Panc1 (cell line): ENCODE measurements at regions of chr11 and their contacts with region 1.

Region 1: DNA sequence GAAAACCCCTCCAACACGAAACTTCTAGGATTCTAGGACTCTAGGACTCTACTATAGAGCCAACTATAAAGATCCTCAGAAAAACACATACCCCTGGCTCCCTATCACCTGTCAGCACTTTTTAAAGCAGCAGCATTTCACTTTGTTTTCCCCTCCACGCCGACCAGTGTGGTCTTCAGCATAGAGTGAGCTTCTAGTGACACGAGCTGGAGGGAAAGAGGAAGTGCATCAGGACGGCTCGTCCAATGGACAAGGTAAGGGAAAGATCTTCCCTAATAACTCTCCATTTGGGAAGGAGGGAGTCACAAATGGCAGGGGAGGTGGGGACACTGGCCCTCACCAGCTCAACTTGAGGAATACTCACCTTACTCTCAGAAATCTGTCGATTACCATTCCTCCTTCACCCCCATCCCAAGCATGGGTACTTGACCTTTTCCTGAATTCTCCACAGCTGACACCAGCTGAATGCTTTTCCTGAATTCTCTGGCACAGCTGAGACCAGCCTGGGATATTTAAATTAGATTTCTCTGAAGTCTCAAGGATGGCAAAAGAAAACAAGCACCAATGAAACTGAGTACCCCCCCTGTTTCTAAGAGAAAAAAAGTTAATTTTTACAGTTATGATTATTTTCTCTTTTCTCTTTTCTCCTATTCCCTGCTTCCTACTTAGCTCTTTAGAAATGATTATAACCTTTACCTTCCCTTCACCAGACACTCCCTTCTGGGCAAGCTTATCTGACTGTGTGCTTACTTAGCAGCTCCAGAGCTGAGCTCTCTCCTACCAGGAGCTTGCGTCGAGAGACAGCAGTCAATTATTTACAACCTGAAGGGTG is 33.3 kb upstream of the NNMT start:
- DNase-seq: no peak
- ATAC-seq: peak; percentile 82
- H3K4me3 ChIP-seq: no peak overlapping the region
- H3K27ac ChIP-seq: no peak overlapping the region
- H3K4me1 ChIP-seq: no peaks in the 10 kb centered on the region
- H3K27me3 ChIP-seq: peaks cover 18% of the 10 kb centered on the region
- CTCF ChIP-seq: peak; percentile 85

Region 2: DNA sequence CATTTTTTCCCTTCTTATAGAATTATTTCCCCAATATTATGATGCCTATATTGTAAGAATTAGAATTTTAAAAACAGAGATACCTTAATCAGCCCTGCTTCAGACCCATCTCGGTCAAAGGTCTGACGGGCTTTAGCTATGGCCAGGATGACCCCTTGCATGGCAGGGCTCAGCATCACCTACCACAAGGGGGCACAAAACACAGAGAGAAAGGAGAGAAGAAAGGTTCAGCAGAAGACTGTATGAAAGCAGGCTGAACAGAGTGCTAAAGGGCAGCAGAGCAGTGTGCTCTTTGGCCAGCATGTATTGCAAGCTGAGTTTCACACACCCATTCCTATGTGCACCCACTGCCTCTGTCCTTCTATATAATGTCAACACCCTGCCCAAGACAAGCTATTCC is 456.5 kb before region 1 on chr11:
- CTCF ChIA-PET with region 1: interaction called, 4 read pairs
- POLR2A ChIA-PET with region 1: no interaction called
- in situ Hi-C with region 1: no loop called
- intact Hi-C with region 1: loop called (anchors 5 kb)
- DNase-seq: no peak
- ATAC-seq: peak; percentile 95
- H3K4me3 ChIP-seq: no peak overlapping the region
- H3K27ac ChIP-seq: no peak overlapping the region
- H3K4me1 ChIP-seq: no peaks in the 10 kb centered on the region
- H3K27me3 ChIP-seq: no peaks in the 10 kb centered on the region
- CTCF ChIP-seq: peak; percentile 78

Region 3: GRCh38 chr11:113896156-113896879 is 366.6 kb before region 1 on chr11:
- CTCF ChIA-PET with region 1: interaction called, 26 read pairs
- POLR2A ChIA-PET with region 1: no interaction called
- in situ Hi-C with region 1: no loop called
- intact Hi-C with region 1: loop called (anchors 1 kb)
- DNase-seq: no peak
- ATAC-seq: peak; percentile 88
- H3K4me3 ChIP-seq: no peak overlapping the region
- H3K27ac ChIP-seq: no peak overlapping the region
- H3K4me1 ChIP-seq: no peaks in the 10 kb centered on the region
- H3K27me3 ChIP-seq: peaks cover 6% of the 10 kb centered on the region; the same call in 1 of the 2 replicates
- CTCF ChIP-seq: peak; percentile 94

Region 4: GRCh38 chr11:113994077-113994954 is 268.6 kb before region 1 on chr11:
- CTCF ChIA-PET with region 1: interaction called, 22 read pairs
- POLR2A ChIA-PET with region 1: no interaction called
- in situ Hi-C with region 1: no loop called
- intact Hi-C with region 1: loop called (anchors 1 kb)
- DNase-seq: no peak
- ATAC-seq: peak; percentile 75
- H3K4me3 ChIP-seq: no peak overlapping the region
- H3K27ac ChIP-seq: no peak overlapping the region
- H3K4me1 ChIP-seq: no peaks in the 10 kb centered on the region
- H3K27me3 ChIP-seq: peaks cover 2% of the 10 kb centered on the region; the same call in 1 of the 2 replicates
- CTCF ChIP-seq: peak; percentile 87

Region 5: DNA sequence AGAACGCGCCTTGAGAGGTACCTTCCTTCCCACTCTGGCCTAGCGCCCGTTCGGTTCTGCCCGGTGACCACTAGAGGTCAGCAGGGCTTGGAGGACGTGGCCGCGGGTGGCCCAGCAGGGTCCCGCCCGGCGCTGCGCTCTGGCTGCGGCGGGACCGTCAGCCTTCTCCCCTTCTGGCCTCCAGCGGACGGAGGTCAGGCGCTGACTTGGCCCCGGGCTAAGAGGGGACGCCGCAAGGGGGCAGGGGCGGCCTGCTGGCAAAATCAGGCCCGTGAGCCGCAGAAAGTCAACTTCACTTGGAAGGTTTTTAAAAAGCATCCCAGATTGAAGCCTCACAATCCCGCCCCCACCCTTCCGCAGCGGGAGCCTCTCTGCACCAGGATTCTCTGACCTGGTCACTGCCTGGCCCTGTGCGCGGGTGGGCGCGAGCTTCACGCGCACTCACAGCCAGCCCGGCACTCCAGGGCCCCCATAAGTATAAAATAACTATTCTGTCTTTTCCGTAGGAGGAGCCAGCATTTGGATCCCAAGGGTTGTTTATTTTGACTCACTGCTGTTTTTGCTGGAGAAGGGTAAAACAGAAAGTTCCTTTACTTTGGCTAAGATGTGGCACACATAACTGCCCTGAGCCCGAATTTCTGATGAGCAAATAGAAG is 226.6 kb before region 1 on chr11:
- CTCF ChIA-PET with region 1: no interaction called
- POLR2A ChIA-PET with region 1: no interaction called
- in situ Hi-C with region 1: no loop called
- intact Hi-C with region 1: loop called (anchors 2 kb)
- DNase-seq: no peak
- ATAC-seq: peak; percentile 94
- H3K4me3 ChIP-seq: peak overlapping the region; percentile 26 to 52
- H3K27ac ChIP-seq: no peak overlapping the region
- H3K4me1 ChIP-seq: peaks cover 10% of the 10 kb centered on the region
- H3K27me3 ChIP-seq: peaks cover 9% of the 10 kb centered on the region
- CTCF ChIP-seq: peak; percentile 97

Region 6: GRCh38 chr11:114250993-114251814 is 11.7 kb before region 1 on chr11:
- CTCF ChIA-PET with region 1: interaction called, 11 read pairs
- POLR2A ChIA-PET with region 1: no interaction called
- in situ Hi-C with region 1: no loop called
- intact Hi-C with region 1: no loop called
- DNase-seq: no peak
- ATAC-seq: no peak
- H3K4me3 ChIP-seq: no peak overlapping the region
- H3K27ac ChIP-seq: no peak overlapping the region
- H3K4me1 ChIP-seq: no peaks in the 10 kb centered on the region
- H3K27me3 ChIP-seq: no peaks in the 10 kb centered on the region
- CTCF ChIP-seq: no peak